ENCODE measurements at regions of chr1 and their contacts with region 1.

Region 1: GRCh38 chr1:154324669-154325582 is at the start of gene ATP8B2:
- DNase-seq: peak; percentile 85
- H3K4me3 Mint-ChIP-seq: peak within 1 kb of the TSS; percentile 76
- H3K27ac Mint-ChIP-seq: peak within 1 kb of the TSS; percentile 77
- H3K4me1 Mint-ChIP-seq: peaks cover 31% of the 10 kb centered on the region
- H3K27me3 Mint-ChIP-seq: no peaks in the 10 kb centered on the region
- CTCF ChIP-seq: peak; percentile 99
- total RNA-seq, gene ATP8B2: 27.1 and 66.3 TPM in 2 replicates

Region 2: GRCh38 chr1:154546264-154547063 is 221.5 kb after region 1 on chr1:
- CTCF ChIA-PET with region 1: no interaction called
- POLR2A ChIA-PET with region 1: no interaction called
- intact Hi-C with region 1: loop called (anchors 1 kb)
- DNase-seq: peak; percentile 83
- H3K4me3 Mint-ChIP-seq: no peak overlapping the region
- H3K27ac Mint-ChIP-seq: no peak overlapping the region
- H3K4me1 Mint-ChIP-seq: peaks cover 10% of the 10 kb centered on the region
- H3K27me3 Mint-ChIP-seq: peaks cover 30% of the 10 kb centered on the region
- CTCF ChIP-seq: peak; percentile 87